Activated naive CD4-positive, alpha-beta T cell treated with anti-CD3 and anti-CD28 coated beads for 36 hours (primary cell): ENCODE measurements at regions of chr1 and their contacts with region 1.

Region 1: DNA sequence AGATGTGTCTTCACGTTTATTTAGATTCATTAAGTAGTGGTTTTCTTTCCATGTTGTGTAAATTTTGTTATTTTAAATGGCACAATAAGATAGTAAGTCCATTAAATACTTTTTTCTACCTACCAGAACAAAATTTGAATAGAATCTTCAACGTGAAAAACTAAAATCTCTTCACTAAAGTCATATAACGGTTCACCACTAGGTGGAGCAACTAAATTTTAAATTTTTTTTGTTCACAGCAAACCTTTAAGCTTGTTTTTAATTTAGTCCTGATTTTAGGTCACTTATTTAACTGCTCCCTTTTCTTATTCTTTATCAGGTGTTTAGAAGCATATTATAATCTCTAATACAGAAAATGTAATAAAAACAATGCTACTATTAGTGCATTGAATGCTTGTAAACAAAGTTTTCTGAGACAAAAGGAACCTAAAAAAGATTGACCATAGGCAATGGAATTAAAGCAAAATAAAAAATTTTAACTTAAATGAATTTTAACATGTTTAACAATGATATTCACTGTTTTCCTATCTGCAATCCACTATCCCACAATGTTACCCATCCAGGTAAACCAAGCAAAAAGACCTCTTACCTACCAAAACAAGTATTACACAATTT is 28.3 kb upstream of the PKN2 start:
- DNase-seq: no peak
- H3K4me3 Mint-ChIP-seq: no peak overlapping the region
- H3K27ac Mint-ChIP-seq: no peak overlapping the region
- H3K4me1 Mint-ChIP-seq: peaks cover 14% of the 10 kb centered on the region
- H3K27me3 Mint-ChIP-seq: no peaks in the 10 kb centered on the region

Region 2: GRCh38 chr1:88063605-88064004 is 592.2 kb before region 1 on chr1:
- CTCF ChIA-PET with region 1: no interaction called
- intact Hi-C with region 1: no loop called
- DNase-seq: no peak
- H3K4me3 Mint-ChIP-seq: no peak overlapping the region
- H3K27ac Mint-ChIP-seq: no peak overlapping the region
- H3K4me1 Mint-ChIP-seq: no peaks in the 10 kb centered on the region
- H3K27me3 Mint-ChIP-seq: peaks cover 5% of the 10 kb centered on the region

Region 3: GRCh38 chr1:88673446-88673845 is 17.7 kb after region 1 on chr1:
- CTCF ChIA-PET with region 1: interaction called, 5 read pairs
- intact Hi-C with region 1: loop called (anchors 1 kb)
- DNase-seq: no peak
- H3K4me3 Mint-ChIP-seq: no peak overlapping the region
- H3K27ac Mint-ChIP-seq: no peak overlapping the region
- H3K4me1 Mint-ChIP-seq: no peaks in the 10 kb centered on the region
- H3K27me3 Mint-ChIP-seq: no peaks in the 10 kb centered on the region

Region 4: DNA sequence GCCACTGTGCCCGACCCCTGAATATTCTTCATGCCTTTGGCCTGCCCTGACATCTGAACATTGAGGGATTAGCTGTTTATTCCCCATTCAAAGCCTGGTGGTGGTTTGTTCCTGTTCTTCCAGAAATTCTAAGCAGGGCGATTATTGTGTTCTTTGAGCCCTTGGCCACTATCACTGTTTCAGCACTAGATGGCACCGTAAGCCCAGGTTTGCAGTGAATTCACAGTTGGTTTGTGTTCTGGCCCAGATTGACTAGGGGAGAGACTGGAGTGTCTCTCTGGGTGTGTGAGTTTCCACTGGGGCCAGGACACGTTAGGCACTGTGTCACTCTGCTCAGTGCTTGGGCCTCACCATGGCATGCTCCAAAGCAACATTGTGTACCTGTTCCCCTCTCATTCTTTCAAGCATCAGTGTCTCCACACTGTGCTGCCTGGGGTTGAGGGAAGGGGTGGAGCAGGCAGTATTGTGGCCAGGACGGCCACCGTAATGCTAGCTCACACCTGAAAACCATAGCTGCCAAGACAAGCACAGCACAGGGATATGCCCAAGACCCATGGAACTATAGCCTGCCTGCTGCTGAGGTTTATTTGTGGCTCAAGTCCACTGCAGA is 81.0 kb after region 1 on chr1:
- CTCF ChIA-PET with region 1: interaction called, 10 read pairs
- intact Hi-C with region 1: no loop called
- DNase-seq: peak; percentile 45
- H3K4me3 Mint-ChIP-seq: no peak overlapping the region
- H3K27ac Mint-ChIP-seq: no peak overlapping the region
- H3K4me1 Mint-ChIP-seq: peaks cover 9% of the 10 kb centered on the region
- H3K27me3 Mint-ChIP-seq: no peaks in the 10 kb centered on the region

Region 5: GRCh38 chr1:88800382-88801051 is 144.7 kb after region 1 on chr1:
- CTCF ChIA-PET with region 1: interaction called, 3 read pairs
- intact Hi-C with region 1: loop called (anchors 5 kb)
- DNase-seq: peak; percentile 72
- H3K4me3 Mint-ChIP-seq: no peak overlapping the region
- H3K27ac Mint-ChIP-seq: peak overlapping the region; percentile 74
- H3K4me1 Mint-ChIP-seq: peaks cover 17% of the 10 kb centered on the region
- H3K27me3 Mint-ChIP-seq: no peaks in the 10 kb centered on the region

Region 6: GRCh38 chr1:88867743-88868521 is 212.1 kb after region 1 on chr1:
- CTCF ChIA-PET with region 1: interaction called, 3 read pairs
- intact Hi-C with region 1: loop called (anchors 2 kb)
- DNase-seq: no peak
- H3K4me3 Mint-ChIP-seq: no peak overlapping the region
- H3K27ac Mint-ChIP-seq: peak overlapping the region; percentile 84
- H3K4me1 Mint-ChIP-seq: peaks cover 57% of the 10 kb centered on the region
- H3K27me3 Mint-ChIP-seq: no peaks in the 10 kb centered on the region

Region 7: GRCh38 chr1:88877382-88877825 is 221.6 kb after region 1 on chr1:
- CTCF ChIA-PET with region 1: interaction called, 63 read pairs
- intact Hi-C with region 1: loop called (anchors 1 kb)
- DNase-seq: no peak
- H3K4me3 Mint-ChIP-seq: no peak overlapping the region
- H3K27ac Mint-ChIP-seq: no peak overlapping the region
- H3K4me1 Mint-ChIP-seq: peaks cover 43% of the 10 kb centered on the region
- H3K27me3 Mint-ChIP-seq: no peaks in the 10 kb centered on the region